Naive thymus-derived CD8-positive, alpha-beta T cell (primary cell): ENCODE measurements at regions of chr16 and their contacts with region 1.

Region 1: GRCh38 chr16:50273681-50274325 is 7.5 kb downstream of the ADCY7 start:
- DNase-seq: peak in 4 of 10 donors; percentile 35 to 66 (median 42)
- ATAC-seq: peak; percentile 24 to 42
- H3K4me3 Mint-ChIP-seq: peak overlapping the region; percentile 82 to 94 (median 90)
- H3K27ac Mint-ChIP-seq: peak overlapping the region; percentile 95 to 99 (median 97)
- H3K4me1 Mint-ChIP-seq: peaks cover 55 to 100% (median 95%) of the 10 kb centered on the region in 4 donors
- H3K27me3 Mint-ChIP-seq: no peaks in the 10 kb centered on the region

Region 2: GRCh38 chr16:50235581-50235980 is 38.2 kb before region 1 on chr16:
- POLR2A ChIA-PET with region 1: no interaction called
- DNase-seq: no peak
- ATAC-seq: no peak
- H3K4me3 Mint-ChIP-seq: no peak overlapping the region
- H3K27ac Mint-ChIP-seq: peak overlapping the region in 1 of 10 donors; percentile 49
- H3K4me1 Mint-ChIP-seq: peaks cover 0 to 2% (median 0%) of the 10 kb centered on the region in 4 donors
- H3K27me3 Mint-ChIP-seq: no peaks in the 10 kb centered on the region

Region 3: DNA sequence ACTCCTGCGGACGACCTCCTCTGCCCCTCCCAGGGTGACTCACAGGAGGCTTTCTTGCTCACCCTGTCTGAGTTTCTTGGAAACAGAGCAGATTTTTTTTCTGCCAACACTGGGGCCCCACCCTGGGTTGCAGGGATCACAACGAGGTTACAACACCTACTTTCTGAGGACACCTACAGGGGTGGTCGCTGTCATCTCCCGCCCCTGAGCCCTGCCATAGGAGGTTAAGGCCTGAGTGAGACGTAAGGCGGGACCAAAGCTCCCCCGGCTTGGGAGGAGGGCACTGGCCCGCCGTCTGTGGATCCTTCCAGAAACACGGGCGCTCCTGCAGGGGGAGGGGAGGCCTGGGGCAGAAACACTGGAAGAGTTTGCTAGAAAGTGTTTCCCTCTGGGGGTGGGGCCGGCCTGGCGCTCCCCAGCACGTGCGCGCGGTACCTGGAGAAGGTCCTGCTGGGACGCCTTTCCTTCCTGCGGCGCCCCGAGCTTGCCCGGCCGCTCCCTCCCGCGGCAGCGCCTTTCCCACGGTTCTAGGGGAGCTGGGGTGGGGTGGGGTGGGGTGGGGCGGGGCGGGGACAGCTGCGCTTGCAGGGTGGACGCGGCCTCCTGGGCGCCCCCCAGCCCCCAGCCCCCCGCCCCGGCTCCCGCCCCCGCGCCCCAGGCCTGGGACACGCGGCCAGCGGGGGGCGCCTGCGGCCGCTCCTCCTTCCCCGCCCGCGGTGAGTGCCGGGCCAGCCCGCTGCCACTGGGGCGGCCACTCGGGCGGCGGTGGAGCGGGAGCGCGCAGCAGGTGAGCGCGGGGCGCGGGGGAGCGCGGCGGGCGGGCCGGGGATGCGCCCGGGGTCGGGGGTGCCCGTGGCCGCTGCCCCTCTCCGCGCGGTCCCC is 28.1 kb before region 1 on chr16:
- POLR2A ChIA-PET with region 1: interaction called, 10 read pairs
- DNase-seq: peak in 6 of 10 donors; percentile 25 to 49 (median 34)
- ATAC-seq: peak; percentile 72 to 87
- H3K4me3 Mint-ChIP-seq: peak overlapping the region; percentile 63 to 86 (median 78)
- H3K27ac Mint-ChIP-seq: peak overlapping the region in 4 of 10 donors; percentile 28 to 82 (median 61)
- H3K4me1 Mint-ChIP-seq: peaks cover 6 to 25% (median 15%) of the 10 kb centered on the region in 4 donors
- H3K27me3 Mint-ChIP-seq: peaks cover 0 to 3% (median 0%) of the 10 kb centered on the region in 5 donors

Region 4: GRCh38 chr16:50313596-50314478 is 40.0 kb after region 1 on chr16:
- POLR2A ChIA-PET with region 1: interaction called, 11 read pairs
- DNase-seq: peak in 6 of 10 donors; percentile 15 to 64 (median 30)
- ATAC-seq: peak; percentile 73 to 81
- H3K4me3 Mint-ChIP-seq: peak overlapping the region in 8 of 10 donors; percentile 25 to 71 (median 50)
- H3K27ac Mint-ChIP-seq: peak overlapping the region; percentile 31 to 95 (median 90)
- H3K4me1 Mint-ChIP-seq: peaks cover 19 to 33% (median 28%) of the 10 kb centered on the region in 4 donors
- H3K27me3 Mint-ChIP-seq: no peaks in the 10 kb centered on the region